ENCODE measurements at regions of chr2 and their contacts with region 1.

Region 1: DNA sequence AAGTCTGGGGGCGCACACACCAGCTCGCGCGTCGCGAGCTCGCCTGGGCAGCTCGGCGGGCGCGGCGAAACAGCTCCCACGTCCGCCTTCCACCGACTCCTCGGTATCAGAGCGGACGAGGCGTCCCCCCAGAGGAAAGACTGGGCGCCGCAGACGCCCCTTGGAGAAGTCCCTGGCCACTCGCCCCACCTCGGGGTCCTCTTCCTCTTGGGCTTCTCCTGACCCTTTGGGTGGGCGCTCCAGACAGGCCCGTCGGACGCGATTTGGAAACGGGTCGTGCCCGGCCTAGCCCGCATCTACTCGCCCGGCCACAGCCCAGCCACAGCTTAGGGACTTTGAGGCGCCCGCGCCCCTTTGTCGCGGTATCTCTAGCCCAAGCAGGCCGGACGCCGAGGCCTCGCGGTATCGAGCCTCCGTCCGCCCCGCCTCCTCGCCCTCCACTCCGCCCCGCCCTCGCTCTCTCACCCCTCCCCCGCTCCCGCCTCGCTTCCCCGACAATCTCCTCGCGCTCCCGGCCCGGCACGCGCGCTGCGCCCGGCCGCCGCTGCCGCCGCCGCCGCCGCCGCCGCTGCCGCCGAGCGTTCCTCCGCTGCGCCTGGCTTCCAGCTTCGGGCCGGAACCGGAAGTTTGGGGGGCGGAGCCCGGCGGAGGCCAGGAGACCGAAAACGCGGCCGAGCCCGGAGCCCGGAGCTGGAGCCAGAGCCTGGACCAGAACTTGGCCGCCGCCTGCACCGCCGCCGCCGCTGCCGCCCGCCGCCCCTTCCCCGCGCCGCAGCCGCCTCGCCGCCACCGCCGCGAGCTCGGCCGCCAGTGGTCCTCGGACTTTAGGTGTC is 749 bp upstream of the ACVR2A start:
- DNase-seq: peak; percentile 96
- ATAC-seq: peak; percentile 96

Region 2: GRCh38 chr2:147910990-147911473 is 67.0 kb after region 1 on chr2:
- intact Hi-C with region 1: no loop called
- DNase-seq: no peak
- ATAC-seq: peak; percentile 30

Region 3: DNA sequence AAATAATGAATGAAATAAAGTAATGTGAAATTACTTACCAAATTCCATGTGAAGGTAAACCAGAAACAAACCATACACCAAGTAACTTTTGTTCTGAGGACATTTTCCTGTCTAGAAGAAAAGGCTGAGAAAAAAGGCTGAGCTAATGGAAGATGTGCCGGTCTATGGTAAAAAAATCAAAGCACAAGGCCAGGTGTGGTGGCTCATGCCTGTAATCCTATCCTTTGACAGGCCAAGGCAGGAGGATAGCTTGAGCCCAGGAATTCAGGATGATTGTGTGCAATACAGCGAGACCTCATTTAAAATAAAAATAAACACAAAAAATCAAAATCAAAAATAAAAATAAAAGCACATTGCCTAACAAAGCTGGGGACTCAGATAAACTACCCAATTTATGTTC is 169.8 kb after region 1 on chr2:
- intact Hi-C with region 1: loop called (anchors 10 kb)
- DNase-seq: no peak
- ATAC-seq: no peak

Region 4: GRCh38 chr2:148122788-148123187 is 278.7 kb after region 1 on chr2:
- intact Hi-C with region 1: no loop called
- DNase-seq: no peak
- ATAC-seq: no peak